ENCODE measurements at regions of chr11 and their contacts with region 1.

Region 1: DNA sequence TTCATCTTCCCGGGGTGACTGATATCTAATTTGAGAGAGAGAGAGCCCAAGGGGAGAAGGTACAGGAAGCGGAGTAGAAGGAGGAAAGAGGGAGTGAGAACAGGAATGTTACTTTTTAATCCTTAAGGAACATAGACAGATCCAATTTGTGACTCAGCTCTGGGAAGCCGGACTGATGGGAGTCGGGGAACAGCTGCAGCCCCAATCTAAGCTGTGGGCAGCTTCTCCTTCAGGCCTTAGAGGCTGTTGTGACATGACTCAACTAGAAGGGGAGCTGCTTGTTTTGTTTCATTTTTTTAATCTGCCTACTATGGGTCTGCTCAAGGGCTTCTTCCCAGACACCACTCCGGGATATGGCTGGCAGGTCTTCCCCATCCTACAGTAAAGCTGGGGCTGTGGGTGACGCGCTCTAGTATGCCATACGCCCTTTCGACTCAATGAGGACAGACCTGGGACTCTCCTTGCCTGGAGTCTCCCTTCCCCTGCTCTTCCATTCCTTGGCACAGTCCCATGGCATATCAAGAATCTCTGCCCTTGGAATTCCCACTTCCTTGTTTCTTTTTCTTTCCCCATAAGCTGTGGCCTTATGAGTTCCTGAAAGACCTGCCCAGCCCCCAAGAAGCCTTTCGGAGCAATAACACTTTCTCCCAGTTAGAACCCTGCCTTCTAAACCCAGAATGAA is 103.3 kb upstream of the AKIP1 start:
- DNase-seq: no peak
- H3K4me3 ChIP-seq: peak overlapping the region; percentile 4 to 13
- H3K27ac ChIP-seq: peak overlapping the region; percentile 67 to 90
- H3K4me1 ChIP-seq: no peaks in the 10 kb centered on the region
- H3K27me3 ChIP-seq: no peaks in the 10 kb centered on the region
- CTCF ChIP-seq: no peak
- POLR2A ChIP-seq: no peak

Region 2: GRCh38 chr11:8709002-8709672 is 98.5 kb before region 1 on chr11:
- intact Hi-C with region 1: loop called (anchors 2 kb)
- DNase-seq: peak; percentile 77
- H3K4me3 ChIP-seq: no peak overlapping the region
- H3K27ac ChIP-seq: peak overlapping the region; percentile 72 to 90
- H3K4me1 ChIP-seq: peaks cover 4% of the 10 kb centered on the region
- H3K27me3 ChIP-seq: no peaks in the 10 kb centered on the region
- CTCF ChIP-seq: no peak
- POLR2A ChIP-seq: no peak

Region 3: DNA sequence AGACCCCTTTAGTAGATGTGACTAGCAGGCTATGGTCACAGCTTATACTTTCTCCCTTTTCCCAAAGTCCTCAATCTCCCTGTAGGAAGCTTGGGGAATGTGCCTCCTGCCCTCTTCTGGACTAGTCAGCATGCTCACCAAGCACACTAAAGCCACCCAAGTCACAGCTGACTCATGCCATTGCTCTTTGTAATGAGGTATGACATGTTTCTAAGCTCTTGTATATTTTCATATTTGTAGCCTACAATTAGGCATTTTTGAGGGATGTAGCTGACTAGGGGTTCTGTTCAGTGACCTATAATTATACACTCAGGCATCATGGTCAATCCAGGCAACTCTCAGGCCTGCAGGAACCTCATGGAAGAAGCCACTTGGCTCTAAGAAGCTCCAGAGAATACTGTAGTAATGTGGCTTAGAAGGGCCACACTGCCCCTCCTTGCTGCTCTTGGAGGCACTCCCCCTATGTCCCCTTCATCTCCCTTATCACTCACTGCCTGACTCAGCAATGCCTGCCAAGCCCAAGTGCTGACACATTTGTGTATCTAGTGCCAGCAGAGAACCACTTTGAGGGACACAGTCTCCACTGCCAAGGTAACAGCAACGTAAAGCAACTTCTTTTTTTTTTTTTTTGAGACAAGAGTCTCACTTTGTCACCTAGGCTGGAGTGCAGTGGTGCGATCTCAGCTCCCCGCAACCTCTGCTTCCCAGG is 38.9 kb before region 1 on chr11:
- intact Hi-C with region 1: loop called (anchors 5 kb)
- DNase-seq: no peak
- H3K4me3 ChIP-seq: no peak overlapping the region
- H3K27ac ChIP-seq: peak overlapping the region in 1 of 2 donors; percentile 4
- H3K4me1 ChIP-seq: no peaks in the 10 kb centered on the region
- H3K27me3 ChIP-seq: no peaks in the 10 kb centered on the region
- CTCF ChIP-seq: peak in 1 of 4 experiments; percentile 42
- POLR2A ChIP-seq: no peak

Measured in prostate gland (tissue), 2 donors.